HepG2 (cell line): ENCODE measurements at regions of chr12 and their contacts with region 1.

Region 1: GRCh38 chr12:101570047-101570446 is 24.7 kb upstream of the MYBPC1 start:
- DNase-seq: peak; percentile 81
- ATAC-seq: peak; percentile 98
- H3K4me3 ChIP-seq: no peak overlapping the region; a peak in 1 of 6 replicates
- H3K27ac ChIP-seq: peak overlapping the region; percentile 19
- H3K4me1 ChIP-seq: peaks cover 27% of the 10 kb centered on the region
- H3K27me3 ChIP-seq: no peaks in the 10 kb centered on the region
- CTCF ChIP-seq: peak; percentile 84
- EP300 ChIP-seq: no peak
- POLR2A ChIP-seq: no peak
- RAD21 ChIP-seq: peak; percentile 76

Region 2: DNA sequence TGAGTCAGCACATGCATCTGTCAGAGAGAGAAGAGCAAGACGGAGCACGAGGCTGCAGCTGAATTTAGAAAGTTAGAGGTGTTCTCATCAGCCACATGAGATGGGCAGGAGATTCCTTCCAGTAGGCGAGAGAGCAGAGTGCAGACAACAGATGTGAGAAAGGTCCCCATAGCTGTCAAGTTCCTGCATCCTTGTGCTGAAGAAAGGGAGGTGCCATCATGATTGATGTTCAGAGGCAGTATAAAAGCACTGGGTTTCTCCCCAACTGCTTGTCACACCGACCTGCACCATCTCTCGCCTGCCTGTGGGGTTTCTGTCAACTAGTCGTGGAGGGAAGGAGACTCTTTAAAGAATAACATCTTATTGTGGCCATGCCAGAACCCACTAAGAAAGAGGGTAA is 24.7 kb after region 1 on chr12 and contains the start of gene MYBPC1:
- CTCF ChIA-PET with region 1: no interaction called
- POLR2A ChIA-PET with region 1: no interaction called
- in situ Hi-C with region 1: no loop called
- intact Hi-C with region 1: no loop called
- DNase-seq: no peak
- ATAC-seq: no peak
- H3K4me3 ChIP-seq: no peak within 1 kb of the TSS
- H3K27ac ChIP-seq: no peak within 1 kb of the TSS
- H3K4me1 ChIP-seq: peaks cover 33% of the 10 kb centered on the region
- H3K27me3 ChIP-seq: no peaks in the 10 kb centered on the region
- CTCF ChIP-seq: no peak
- EP300 ChIP-seq: no peak
- POLR2A ChIP-seq: no peak
- RAD21 ChIP-seq: no peak
- total RNA-seq, gene MYBPC1: 0.31 and 0.44 TPM in 2 replicates

Region 3: GRCh38 chr12:101607902-101608742 is 38.1 kb after region 1 on chr12:
- CTCF ChIA-PET with region 1: no interaction called
- POLR2A ChIA-PET with region 1: no interaction called
- in situ Hi-C with region 1: no loop called
- intact Hi-C with region 1: loop called (anchors 2 kb)
- DNase-seq: peak; percentile 100
- ATAC-seq: peak; percentile 93
- H3K4me3 ChIP-seq: peak overlapping the region in 2 of 3 experiments; percentile 29 to 51; a peak in 3 of 6 replicates
- H3K27ac ChIP-seq: peak overlapping the region; percentile 98
- H3K4me1 ChIP-seq: peaks cover 78% of the 10 kb centered on the region
- H3K27me3 ChIP-seq: no peaks in the 10 kb centered on the region
- CTCF ChIP-seq: no peak
- EP300 ChIP-seq: peak; percentile 94 to 100; a peak in 3 of 4 replicates
- POLR2A ChIP-seq: peak in 1 of 2 experiments; percentile 23; a peak in 2 of 4 replicates
- RAD21 ChIP-seq: peak; percentile 31; the same call in 1 of the 2 replicates

Region 4: GRCh38 chr12:101616027-101616494 is 46.0 kb after region 1 on chr12:
- CTCF ChIA-PET with region 1: no interaction called
- POLR2A ChIA-PET with region 1: no interaction called
- in situ Hi-C with region 1: no loop called
- intact Hi-C with region 1: loop called (anchors 1 kb)
- DNase-seq: peak; percentile 86
- ATAC-seq: peak; percentile 68
- H3K4me3 ChIP-seq: peak overlapping the region in 2 of 3 experiments; percentile 26 to 35; a peak in 4 of 6 replicates
- H3K27ac ChIP-seq: peak overlapping the region; percentile 74
- H3K4me1 ChIP-seq: peaks cover 78% of the 10 kb centered on the region
- H3K27me3 ChIP-seq: no peaks in the 10 kb centered on the region
- CTCF ChIP-seq: no peak
- EP300 ChIP-seq: peak in 1 of 2 experiments; percentile 76; a peak in 2 of 4 replicates
- POLR2A ChIP-seq: no peak
- RAD21 ChIP-seq: no peak

Region 5: DNA sequence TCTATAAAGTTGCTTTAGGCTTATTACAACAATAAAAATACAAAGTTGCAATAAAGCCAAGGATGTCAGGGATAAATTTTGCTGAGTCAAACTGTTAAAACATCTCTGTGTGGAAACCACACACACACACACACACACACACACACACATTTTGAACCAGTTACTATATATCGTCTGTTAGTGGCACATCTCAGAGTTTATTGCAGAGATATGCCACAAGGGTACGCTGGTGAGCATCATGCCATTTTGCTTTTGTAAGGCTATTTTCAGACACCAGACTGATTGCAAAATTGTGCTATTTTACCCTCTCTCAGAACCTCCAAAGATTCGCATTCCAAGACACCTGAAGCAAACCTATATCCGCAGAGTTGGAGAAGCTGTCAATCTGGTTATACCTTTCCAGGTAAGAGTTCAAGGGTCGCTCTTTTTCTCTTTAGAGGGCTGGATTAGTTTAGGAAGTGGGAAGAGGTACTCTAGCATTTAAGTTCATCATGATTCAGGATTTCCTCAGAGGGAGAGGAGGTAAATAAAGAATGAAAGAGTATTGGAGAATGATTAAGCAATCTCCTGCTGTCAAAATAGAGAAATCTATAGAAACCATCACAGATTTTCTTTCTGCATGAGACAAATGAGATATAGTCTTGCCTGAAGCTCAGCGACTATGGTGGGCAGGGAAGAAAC is 100.1 kb after region 1 on chr12:
- CTCF ChIA-PET with region 1: interaction called, 6 read pairs
- POLR2A ChIA-PET with region 1: no interaction called
- in situ Hi-C with region 1: no loop called
- intact Hi-C with region 1: loop called (anchors 1 kb)
- DNase-seq: peak; percentile 66
- ATAC-seq: peak; percentile 74
- H3K4me3 ChIP-seq: peak overlapping the region in 1 of 3 experiments; percentile 9; a peak in 1 of 6 replicates
- H3K27ac ChIP-seq: peak overlapping the region; percentile 43
- H3K4me1 ChIP-seq: peaks cover 72% of the 10 kb centered on the region
- H3K27me3 ChIP-seq: no peaks in the 10 kb centered on the region
- CTCF ChIP-seq: peak; percentile 77
- EP300 ChIP-seq: no peak
- POLR2A ChIP-seq: no peak
- RAD21 ChIP-seq: peak; percentile 74

Region 6: GRCh38 chr12:101713059-101713682 is 143.1 kb after region 1 on chr12:
- CTCF ChIA-PET with region 1: no interaction called
- POLR2A ChIA-PET with region 1: no interaction called
- in situ Hi-C with region 1: no loop called
- intact Hi-C with region 1: loop called (anchors 2 kb)
- DNase-seq: peak; percentile 85
- ATAC-seq: peak; percentile 97
- H3K4me3 ChIP-seq: peak overlapping the region; percentile 25 to 51 (median 35)
- H3K27ac ChIP-seq: peak overlapping the region; percentile 70
- H3K4me1 ChIP-seq: peaks cover 62% of the 10 kb centered on the region
- H3K27me3 ChIP-seq: no peaks in the 10 kb centered on the region; a peak in 1 of 5 replicates
- CTCF ChIP-seq: peak; percentile 20; the same call in 1 of the 2 replicates
- EP300 ChIP-seq: peak in 1 of 2 experiments; percentile 77; a peak in 2 of 4 replicates
- POLR2A ChIP-seq: peak in 1 of 2 experiments; percentile 26; a peak in 1 of 4 replicates
- RAD21 ChIP-seq: no peak

Region 7: DNA sequence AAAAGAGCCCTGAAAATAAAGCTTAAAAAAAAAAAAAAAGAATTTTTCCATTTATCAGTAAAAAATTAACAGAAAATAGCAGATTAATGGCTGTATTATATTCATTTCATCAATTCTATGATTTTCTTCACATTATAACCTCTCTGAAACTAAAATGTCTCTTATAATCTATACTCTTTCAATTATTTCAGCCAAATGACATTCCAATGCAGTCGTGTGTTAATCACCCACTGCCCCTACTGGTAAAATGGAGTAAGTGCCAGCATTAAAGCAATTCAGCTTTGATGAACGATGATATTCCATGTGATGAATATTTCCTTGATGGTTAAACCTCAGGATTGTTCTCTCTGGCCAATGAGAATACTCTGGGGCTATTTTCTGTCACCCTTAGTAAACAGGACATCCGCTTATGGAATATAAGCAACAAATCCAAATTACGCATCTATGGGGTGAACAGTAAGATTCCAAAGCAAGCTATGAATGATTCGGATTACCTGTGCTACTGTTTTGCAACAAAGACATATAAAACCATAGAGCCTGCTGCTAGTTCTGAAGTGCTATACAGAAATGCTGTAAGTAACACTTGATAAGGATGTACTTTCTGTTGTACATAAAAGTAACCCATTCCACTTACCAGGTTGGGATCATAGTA is 189.5 kb after region 1 on chr12:
- CTCF ChIA-PET with region 1: no interaction called
- POLR2A ChIA-PET with region 1: no interaction called
- in situ Hi-C with region 1: no loop called
- intact Hi-C with region 1: loop called (anchors 1 kb)
- DNase-seq: peak; percentile 39
- ATAC-seq: peak; percentile 76
- H3K4me3 ChIP-seq: no peak overlapping the region
- H3K27ac ChIP-seq: no peak overlapping the region
- H3K4me1 ChIP-seq: no peaks in the 10 kb centered on the region
- H3K27me3 ChIP-seq: no peaks in the 10 kb centered on the region
- CTCF ChIP-seq: peak; percentile 59
- EP300 ChIP-seq: no peak
- POLR2A ChIP-seq: no peak
- RAD21 ChIP-seq: peak; percentile 40; the same call in 1 of the 2 replicates

Region 8: DNA sequence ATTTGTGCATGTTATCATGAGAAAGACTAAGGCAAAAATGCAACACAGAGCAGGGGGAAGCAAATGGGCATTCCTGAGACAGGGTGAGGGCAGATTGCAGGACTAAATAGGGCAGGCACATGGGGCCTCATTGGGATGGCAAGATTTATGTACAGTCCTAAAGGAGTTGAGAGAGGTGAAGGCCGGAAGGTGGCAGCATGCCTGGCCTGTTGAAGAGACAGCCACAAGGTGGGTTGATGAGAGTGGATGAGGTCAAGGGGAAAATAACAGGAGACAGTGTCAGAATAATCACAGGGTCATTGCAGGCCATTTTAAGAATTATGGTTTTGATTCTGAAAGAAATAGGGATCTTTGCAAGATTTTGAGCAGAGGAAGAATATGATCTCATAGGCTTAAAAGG is 1326.0 kb after region 1 on chr12:
- CTCF ChIA-PET with region 1: no interaction called
- POLR2A ChIA-PET with region 1: no interaction called
- in situ Hi-C with region 1: no loop called
- intact Hi-C with region 1: no loop called
- DNase-seq: no peak
- ATAC-seq: no peak
- H3K4me3 ChIP-seq: no peak overlapping the region
- H3K27ac ChIP-seq: peak overlapping the region; percentile 44
- H3K4me1 ChIP-seq: peaks cover 63% of the 10 kb centered on the region
- H3K27me3 ChIP-seq: no peaks in the 10 kb centered on the region
- CTCF ChIP-seq: peak; percentile 31
- EP300 ChIP-seq: no peak
- POLR2A ChIP-seq: no peak
- RAD21 ChIP-seq: no peak